Heart left ventricle (tissue), 16 donors: ENCODE measurements at regions of chr1 and their contacts with region 1.

Region 1: DNA sequence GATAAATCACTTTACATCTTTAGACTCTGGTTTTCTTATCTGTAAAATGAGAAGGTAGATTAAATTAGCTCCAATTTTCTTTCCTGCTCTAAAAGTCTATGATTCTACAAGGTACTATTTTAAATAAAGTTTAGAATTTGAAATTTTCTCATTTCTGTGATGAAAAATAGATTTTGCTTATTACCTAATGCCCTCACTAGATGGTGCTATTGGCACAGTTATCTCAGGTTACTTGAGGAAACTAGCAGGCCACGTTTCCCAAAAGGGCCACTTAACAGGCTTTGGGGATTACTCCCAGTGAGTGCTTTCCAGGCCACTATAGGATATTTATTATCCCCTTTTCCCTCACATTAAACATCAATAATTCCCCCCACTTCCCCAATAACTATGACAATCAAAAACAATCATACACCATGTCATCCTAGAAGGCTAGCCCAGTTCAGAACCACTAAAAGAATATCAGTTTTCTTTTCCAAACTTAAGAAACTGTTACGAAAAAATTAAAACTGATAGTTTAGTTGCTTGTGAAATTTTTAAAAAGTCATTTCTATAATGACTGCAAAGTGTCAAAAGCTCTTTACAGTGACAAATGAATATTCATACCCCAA is 30.6 kb downstream of the OMA1 start:
- DNase-seq: peak in 4 of 5 donors; percentile 20 to 35 (median 30)
- ATAC-seq: peak in 2 of 4 donors; percentile 39 to 72
- H3K4me3 ChIP-seq: no peak overlapping the region
- H3K27ac ChIP-seq: no peak overlapping the region
- H3K4me1 ChIP-seq: peaks cover 0 to 14% (median 0%) of the 10 kb centered on the region in 12 donors
- H3K27me3 ChIP-seq: no peaks in the 10 kb centered on the region
- CTCF ChIP-seq: peak; percentile 56 to 82 (median 72)
- POLR2A ChIP-seq: no peak

Region 2: GRCh38 chr1:58652651-58653184 is 136.8 kb after region 1 on chr1:
- intact Hi-C with region 1: loop called (anchors 1 to 5 kb)
- DNase-seq: peak in 4 of 5 donors; percentile 35 to 62 (median 49)
- ATAC-seq: peak; percentile 76 to 89 (median 87)
- H3K4me3 ChIP-seq: no peak overlapping the region
- H3K27ac ChIP-seq: no peak overlapping the region
- H3K4me1 ChIP-seq: peaks cover 0 to 7% (median 0%) of the 10 kb centered on the region in 12 donors
- H3K27me3 ChIP-seq: no peaks in the 10 kb centered on the region
- CTCF ChIP-seq: peak; percentile 68 to 94 (median 85)
- POLR2A ChIP-seq: no peak

Region 3: DNA sequence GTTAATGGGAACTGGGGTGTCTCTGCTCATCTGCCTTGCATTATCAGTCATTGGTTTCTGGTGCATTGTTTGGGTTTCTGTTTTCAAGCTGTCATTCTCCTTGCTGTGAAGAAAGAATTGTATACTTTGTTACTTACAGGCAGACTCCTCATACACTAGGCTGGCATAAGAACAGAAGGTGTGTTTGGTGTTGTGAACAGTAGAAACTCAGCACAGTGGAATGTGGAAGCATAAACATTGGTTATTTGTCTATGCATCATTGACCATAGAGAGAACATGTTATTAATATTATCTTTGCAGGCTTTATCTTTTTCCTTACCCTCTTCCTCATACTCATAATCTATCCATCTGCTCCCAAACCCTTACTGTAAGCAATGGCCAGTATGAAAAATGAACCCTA is 1539.4 kb after region 1 on chr1:
- intact Hi-C with region 1: no loop called
- DNase-seq: no peak
- ATAC-seq: no peak
- H3K4me3 ChIP-seq: no peak overlapping the region
- H3K27ac ChIP-seq: no peak overlapping the region
- H3K4me1 ChIP-seq: no peaks in the 10 kb centered on the region
- H3K27me3 ChIP-seq: no peaks in the 10 kb centered on the region
- CTCF ChIP-seq: no peak
- POLR2A ChIP-seq: no peak